Activated T-helper 1 cell treated with anti-CD3 and anti-CD28 coated beads, Interleukin-12 subunit alpha, Interleukin-12 subunit beta, Interleukin-2, Interleukin-4 antibody, amounts not matched to agents 30 ng/mL and 10 ng/mL and 1 ng/mL, durations not matched to agents 14 hours and 24 hours and 36 hours (primary cell): ENCODE measurements at regions of chr15 and their contacts with region 1.

Region 1: GRCh38 chr15:96330450-96331145 is at the start of gene NR2F2:
- DNase-seq: peak; percentile 47
- H3K4me3 Mint-ChIP-seq: peak within 1 kb of the TSS; percentile 86
- H3K27ac Mint-ChIP-seq: peak within 1 kb of the TSS; percentile 84
- H3K4me1 Mint-ChIP-seq: peaks cover 13% of the 10 kb centered on the region
- H3K27me3 Mint-ChIP-seq: peaks cover 80% of the 10 kb centered on the region
- total RNA-seq, gene NR2F2: not detected in 2 replicates

Region 2: GRCh38 chr15:95025924-95026728 is 1304.5 kb before region 1 on chr15:
- intact Hi-C with region 1: loop called (anchors 10 kb)
- DNase-seq: no peak
- H3K4me3 Mint-ChIP-seq: no peak overlapping the region
- H3K27ac Mint-ChIP-seq: no peak overlapping the region
- H3K4me1 Mint-ChIP-seq: no peaks in the 10 kb centered on the region
- H3K27me3 Mint-ChIP-seq: no peaks in the 10 kb centered on the region

Region 3: DNA sequence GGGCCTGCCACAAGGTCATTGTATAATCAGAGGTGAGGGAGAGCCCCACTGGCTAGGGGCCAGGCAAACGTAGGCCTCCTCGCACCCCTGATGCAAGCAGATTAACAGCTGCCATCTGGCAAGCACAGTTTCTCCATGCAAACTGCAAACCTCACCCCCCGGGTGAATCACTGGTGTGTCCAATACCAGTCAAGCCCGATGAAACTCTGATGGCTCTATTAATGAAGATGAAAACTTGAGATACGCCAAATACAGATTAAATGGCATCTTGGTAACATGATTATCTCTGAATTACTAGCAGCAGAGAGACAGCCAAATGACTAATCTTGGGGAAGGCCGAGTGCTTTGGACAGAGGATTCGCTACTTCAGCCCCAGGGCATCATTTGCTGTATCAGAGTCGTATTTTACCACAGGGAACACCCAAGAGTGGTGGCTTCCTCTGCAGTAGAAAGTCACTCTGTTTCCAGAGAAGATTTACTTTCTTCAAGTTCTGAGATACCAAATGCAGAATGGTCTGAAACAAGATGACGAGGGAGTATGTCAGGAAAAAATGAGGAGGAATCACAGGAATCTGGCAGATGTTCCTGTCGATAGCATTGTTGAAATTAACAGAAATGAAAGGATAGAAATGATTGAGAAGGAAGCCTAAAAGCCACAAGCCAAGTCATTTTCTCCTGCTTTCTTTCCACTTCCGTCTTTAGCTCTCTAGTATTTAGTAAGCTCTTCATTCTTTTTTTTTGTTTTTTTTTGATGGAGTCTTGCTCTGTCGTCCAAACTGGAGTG is 96.3 kb before region 1 on chr15:
- intact Hi-C with region 1: no loop called
- DNase-seq: no peak
- H3K4me3 Mint-ChIP-seq: no peak overlapping the region
- H3K27ac Mint-ChIP-seq: no peak overlapping the region
- H3K4me1 Mint-ChIP-seq: no peaks in the 10 kb centered on the region
- H3K27me3 Mint-ChIP-seq: no peaks in the 10 kb centered on the region

Region 4: DNA sequence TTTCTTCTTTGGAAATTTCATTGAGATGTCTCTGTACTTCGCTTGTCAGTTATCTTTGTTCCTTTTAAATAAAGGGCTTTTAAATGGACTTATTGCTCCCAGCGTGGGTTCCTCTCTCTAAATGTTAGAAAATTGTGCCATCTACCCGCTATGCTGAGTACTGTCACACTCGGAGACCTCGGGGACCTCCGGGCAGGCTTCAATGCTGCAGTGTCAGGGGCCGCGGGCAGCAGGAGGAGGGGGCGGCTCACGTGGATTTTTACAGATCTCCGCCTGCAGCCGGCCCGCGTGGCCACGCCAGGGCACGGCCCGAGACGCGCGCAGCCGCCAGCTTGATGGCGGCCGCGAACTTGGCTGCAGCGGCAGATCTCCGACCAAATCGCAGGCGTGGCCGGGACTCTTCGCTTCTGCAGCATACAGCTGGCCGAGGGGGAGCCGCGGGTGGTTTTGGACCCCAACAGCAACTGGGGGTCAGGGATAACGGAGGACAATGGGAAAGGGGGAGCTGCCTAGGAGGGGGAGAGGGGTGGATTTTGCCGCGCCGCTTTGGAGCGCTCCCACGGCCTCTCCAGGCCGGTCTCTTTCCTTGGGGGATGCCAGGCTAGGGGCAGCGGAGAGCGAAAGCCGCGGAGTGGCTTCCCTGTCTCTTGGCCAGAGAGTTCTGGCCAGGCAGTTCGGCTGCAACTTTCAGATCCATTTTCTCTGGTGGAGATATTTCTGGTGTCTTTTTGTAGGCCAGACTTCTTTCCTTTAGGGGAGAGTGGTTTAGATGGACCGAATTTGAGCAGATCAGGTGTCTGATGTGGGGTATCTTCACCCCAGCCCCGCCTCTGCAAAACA is 15.2 kb after region 1 on chr15:
- intact Hi-C with region 1: loop called (anchors 2 kb)
- DNase-seq: no peak
- H3K4me3 Mint-ChIP-seq: peak overlapping the region; percentile 0
- H3K27ac Mint-ChIP-seq: peak overlapping the region; percentile 31
- H3K4me1 Mint-ChIP-seq: peaks cover 4% of the 10 kb centered on the region
- H3K27me3 Mint-ChIP-seq: peaks cover 87% of the 10 kb centered on the region

Region 5: DNA sequence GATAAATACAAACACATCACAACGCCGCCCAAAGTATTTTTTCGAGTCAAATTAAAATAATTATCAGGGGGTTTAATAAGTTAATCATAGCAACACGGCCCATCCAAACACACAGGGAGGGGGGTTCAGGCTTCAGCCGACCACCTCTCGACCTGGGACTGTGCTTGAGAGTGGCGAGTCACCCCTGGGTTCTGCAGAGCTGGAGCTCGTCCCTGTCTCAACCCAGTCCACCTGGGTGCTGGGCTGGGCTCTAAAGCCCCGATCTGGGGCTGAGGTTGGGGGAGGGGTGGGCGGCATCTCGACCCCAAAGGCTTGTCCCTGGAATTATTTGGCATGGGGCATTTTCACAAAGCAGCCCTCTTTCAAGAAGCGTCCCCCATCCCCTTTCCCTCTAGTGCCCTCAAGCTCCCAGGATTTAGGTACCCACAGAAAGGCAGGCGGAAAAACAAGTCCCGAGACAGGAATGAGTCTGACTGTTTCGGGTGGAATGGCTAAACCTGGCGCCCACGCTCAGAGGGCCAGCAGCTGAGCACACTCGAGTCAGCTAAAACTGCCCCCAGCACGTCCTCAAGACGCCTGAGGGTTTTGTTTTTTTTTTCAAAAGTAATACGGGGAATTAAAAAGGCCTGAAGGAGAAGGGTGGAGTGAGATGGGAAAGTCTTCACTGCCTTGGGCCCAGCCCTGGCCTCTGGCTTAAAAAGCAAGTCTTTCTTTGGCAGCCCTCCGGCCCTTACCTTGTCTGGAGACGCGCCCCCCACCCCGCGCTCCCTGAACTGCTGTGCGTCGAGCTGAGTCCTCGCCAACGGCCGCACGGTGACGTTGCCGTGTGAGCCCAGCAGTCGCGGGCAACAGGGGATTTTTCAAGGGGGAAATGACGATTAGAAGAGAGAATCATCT is 32.4 kb after region 1 on chr15:
- intact Hi-C with region 1: loop called (anchors 2 kb)
- DNase-seq: no peak
- H3K4me3 Mint-ChIP-seq: no peak overlapping the region
- H3K27ac Mint-ChIP-seq: peak overlapping the region; percentile 45
- H3K4me1 Mint-ChIP-seq: no peaks in the 10 kb centered on the region
- H3K27me3 Mint-ChIP-seq: peaks cover 69% of the 10 kb centered on the region

Region 6: GRCh38 chr15:97248376-97248775 is 917.8 kb after region 1 on chr15:
- intact Hi-C with region 1: loop called (anchors 10 kb)
- DNase-seq: no peak
- H3K4me3 Mint-ChIP-seq: no peak overlapping the region
- H3K27ac Mint-ChIP-seq: no peak overlapping the region
- H3K4me1 Mint-ChIP-seq: no peaks in the 10 kb centered on the region
- H3K27me3 Mint-ChIP-seq: no peaks in the 10 kb centered on the region